Naive thymus-derived CD8-positive, alpha-beta T cell (primary cell): ENCODE measurements at regions of chr6 and their contacts with region 1.

Region 1: DNA sequence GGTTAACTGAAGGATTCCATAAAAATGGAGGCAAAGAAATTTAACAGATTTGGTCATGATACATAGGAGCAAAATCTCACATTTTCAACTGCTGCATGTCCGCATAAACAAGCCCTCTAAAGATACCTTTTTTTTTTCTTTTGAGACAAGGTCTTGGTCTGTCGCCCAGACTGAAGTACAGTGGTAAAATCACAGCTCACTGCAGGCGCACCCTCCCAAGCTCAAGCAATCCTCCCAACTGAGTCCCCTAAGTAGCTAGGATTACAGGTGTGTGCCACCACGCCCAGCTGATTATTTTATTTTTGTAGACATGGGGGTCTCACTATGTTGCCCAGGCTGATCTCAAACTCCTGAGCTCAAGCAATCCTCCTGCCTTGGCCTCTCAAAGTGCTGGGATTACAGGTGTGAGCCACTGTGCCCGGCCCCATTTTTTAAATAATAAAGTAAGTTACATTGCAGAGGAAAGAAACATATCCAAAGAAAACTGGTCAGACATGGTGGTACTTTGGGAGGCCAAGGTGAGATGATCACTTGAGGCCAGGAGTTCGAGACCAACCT is 13.7 kb downstream of the MDN1 start:
- DNase-seq: no peak
- ATAC-seq: no peak
- H3K4me3 Mint-ChIP-seq: no peak overlapping the region
- H3K27ac Mint-ChIP-seq: peak overlapping the region in 5 of 10 donors; percentile 26 to 73 (median 63)
- H3K4me1 Mint-ChIP-seq: peaks cover 9 to 35% (median 28%) of the 10 kb centered on the region in 4 donors
- H3K27me3 Mint-ChIP-seq: no peaks in the 10 kb centered on the region

Region 2: DNA sequence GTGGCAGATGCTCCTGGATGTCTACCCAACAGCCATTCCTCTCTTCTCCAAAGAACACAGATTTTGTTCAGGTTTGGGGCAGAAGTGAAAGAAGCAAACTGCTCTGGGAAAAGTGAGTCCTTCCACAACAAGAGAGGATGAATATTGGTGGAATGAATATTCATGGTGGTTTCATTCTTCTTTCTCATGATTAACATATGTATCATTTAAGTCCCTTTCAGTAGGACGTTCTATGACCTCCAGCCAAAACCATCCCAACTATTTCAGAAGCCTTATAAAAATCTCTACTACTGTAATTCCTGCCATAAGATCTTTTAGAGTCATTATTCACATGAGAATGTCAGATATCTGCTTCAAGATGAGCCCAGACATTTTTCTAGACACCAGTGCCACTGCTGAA is 30.7 kb before region 1 on chr6:
- POLR2A ChIA-PET with region 1: no interaction called
- DNase-seq: no peak
- ATAC-seq: no peak
- H3K4me3 Mint-ChIP-seq: no peak overlapping the region
- H3K27ac Mint-ChIP-seq: peak overlapping the region in 1 of 10 donors; percentile 47
- H3K4me1 Mint-ChIP-seq: no peaks in the 10 kb centered on the region
- H3K27me3 Mint-ChIP-seq: no peaks in the 10 kb centered on the region

Region 3: DNA sequence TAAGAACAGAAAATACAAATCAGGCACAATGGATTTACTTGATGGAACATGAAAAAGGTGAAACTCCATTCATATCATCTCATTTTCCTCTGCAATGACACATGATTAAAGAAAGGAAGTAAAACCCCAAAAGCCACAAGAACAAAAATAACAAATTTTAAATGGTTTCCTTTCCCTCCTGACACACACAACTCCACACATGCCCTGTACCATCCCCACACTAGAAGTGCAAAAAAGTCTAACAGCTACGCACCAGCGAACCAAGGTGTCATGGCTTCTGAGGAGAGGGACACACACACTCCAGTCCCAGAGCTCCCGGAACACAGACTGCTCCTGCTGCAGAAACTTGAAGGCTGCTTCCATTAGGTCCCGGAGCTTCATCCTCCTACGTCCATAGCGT is 11.6 kb before region 1 on chr6:
- POLR2A ChIA-PET with region 1: interaction called, 11 read pairs
- DNase-seq: peak in 3 of 10 donors; percentile 30 to 63 (median 52)
- ATAC-seq: peak; percentile 69 to 77
- H3K4me3 Mint-ChIP-seq: peak overlapping the region; percentile 16 to 85 (median 77)
- H3K27ac Mint-ChIP-seq: peak overlapping the region; percentile 24 to 83 (median 60)
- H3K4me1 Mint-ChIP-seq: peaks cover 23 to 29% (median 27%) of the 10 kb centered on the region in 4 donors
- H3K27me3 Mint-ChIP-seq: no peaks in the 10 kb centered on the region

Region 4: DNA sequence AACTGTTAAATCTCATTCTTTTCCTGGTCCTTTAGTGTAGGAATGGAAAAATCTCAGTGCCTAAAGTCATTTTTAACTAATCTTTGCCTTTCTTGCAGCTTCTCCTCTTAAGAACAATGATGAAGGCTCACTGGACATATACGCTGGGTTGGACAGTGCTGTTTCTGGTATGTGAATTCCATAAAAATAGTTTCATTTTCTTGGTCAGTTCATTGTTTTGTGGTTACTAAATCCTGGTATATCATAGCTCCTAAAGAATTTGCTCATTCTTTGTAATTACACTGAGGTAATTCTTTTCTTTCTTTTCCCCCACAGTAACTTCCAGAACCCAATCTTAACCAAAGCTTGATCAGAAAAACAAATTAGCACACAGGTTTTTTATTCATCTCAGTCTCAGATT is 47.2 kb after region 1 on chr6:
- POLR2A ChIA-PET with region 1: no interaction called
- DNase-seq: no peak
- ATAC-seq: no peak
- H3K4me3 Mint-ChIP-seq: no peak overlapping the region
- H3K27ac Mint-ChIP-seq: no peak overlapping the region
- H3K4me1 Mint-ChIP-seq: peaks cover 0 to 14% (median 4%) of the 10 kb centered on the region in 4 donors
- H3K27me3 Mint-ChIP-seq: no peaks in the 10 kb centered on the region